Upper lobe of right lung (tissue), 1 donor: ENCODE measurements at regions of chr12 and their contacts with region 1.

Region 1: GRCh38 chr12:107759410-107759809 is 1.5 kb downstream of the PRDM4 start:
- DNase-seq: no peak
- ATAC-seq: no peak
- H3K4me3 ChIP-seq: peak overlapping the region; percentile 83
- H3K27ac ChIP-seq: no peak overlapping the region
- H3K4me1 ChIP-seq: peaks cover 21% of the 10 kb centered on the region
- H3K27me3 ChIP-seq: no peaks in the 10 kb centered on the region
- CTCF ChIP-seq: no peak

Region 2: GRCh38 chr12:107685360-107686248 is 73.8 kb before region 1 on chr12 and contains the start of gene PWP1:
- intact Hi-C with region 1: loop called (anchors 10 kb)
- DNase-seq: peak; percentile 97
- ATAC-seq: peak; percentile 97
- H3K4me3 ChIP-seq: peak within 1 kb of the TSS; percentile 99
- H3K27ac ChIP-seq: peak within 1 kb of the TSS; percentile 88
- H3K4me1 ChIP-seq: peaks cover 9% of the 10 kb centered on the region
- H3K27me3 ChIP-seq: no peaks in the 10 kb centered on the region
- CTCF ChIP-seq: no peak
- total RNA-seq, gene PWP1: 25.8 TPM